ENCODE measurements at regions of chr1 and their contacts with region 1.

Region 1: DNA sequence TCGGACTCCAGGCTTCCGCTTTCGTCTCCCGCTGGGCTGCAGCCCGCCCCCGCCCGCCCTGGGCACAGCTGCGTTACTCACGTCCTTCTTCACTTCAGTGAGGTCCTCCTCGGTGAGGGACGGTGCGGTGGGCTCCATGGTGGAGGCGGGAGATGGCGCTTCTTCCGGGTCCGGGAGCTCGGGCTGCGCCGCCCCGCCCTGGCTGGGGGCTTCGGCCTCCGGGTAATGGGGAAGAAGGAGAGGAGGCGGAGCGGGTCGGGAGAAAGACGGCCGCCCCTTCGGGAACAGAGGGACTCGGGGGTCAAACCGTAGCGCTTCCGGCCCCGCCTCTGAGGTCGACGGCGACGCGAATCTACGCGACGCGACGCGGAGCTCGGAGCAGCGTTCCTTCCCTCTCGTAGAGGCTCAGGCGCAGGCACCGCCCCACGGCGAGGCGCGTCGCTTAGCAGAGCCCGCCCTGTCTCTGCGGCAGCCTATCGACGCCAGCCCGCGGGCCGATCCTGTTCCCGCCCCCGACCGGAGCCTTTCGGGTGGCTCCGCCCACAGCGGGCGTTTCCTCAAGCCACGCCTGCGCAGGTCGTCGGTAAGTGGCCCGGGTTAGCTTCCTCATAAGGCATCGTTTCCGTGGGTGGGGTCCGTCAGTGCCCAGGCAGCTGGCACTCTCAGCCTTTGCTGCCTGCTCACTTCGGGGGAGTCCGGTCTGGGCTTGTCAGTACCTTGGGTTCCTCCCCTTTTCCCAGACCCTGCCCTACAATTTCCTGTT is at the start of gene BCL10:
- DNase-seq: peak; percentile 99
- ATAC-seq: peak; percentile 92
- H3K4me3 ChIP-seq: peak within 1 kb of the TSS; percentile 87 to 99 (median 98)
- H3K4me3 Mint-ChIP-seq: peak within 1 kb of the TSS; percentile 96
- H3K27ac ChIP-seq: peak within 1 kb of the TSS; percentile 99
- H3K27ac Mint-ChIP-seq: peak within 1 kb of the TSS; percentile 97
- H3K4me1 ChIP-seq: peaks cover 38 to 47% of the 10 kb centered on the region in 2 donors
- H3K4me1 Mint-ChIP-seq: peaks cover 55% of the 10 kb centered on the region
- H3K27me3 ChIP-seq: no peaks in the 10 kb centered on the region
- H3K27me3 Mint-ChIP-seq: no peaks in the 10 kb centered on the region
- CTCF ChIP-seq: no peak
- total RNA-seq, gene BCL10: 60.5 and 64.4 TPM in 2 replicates

Region 2: DNA sequence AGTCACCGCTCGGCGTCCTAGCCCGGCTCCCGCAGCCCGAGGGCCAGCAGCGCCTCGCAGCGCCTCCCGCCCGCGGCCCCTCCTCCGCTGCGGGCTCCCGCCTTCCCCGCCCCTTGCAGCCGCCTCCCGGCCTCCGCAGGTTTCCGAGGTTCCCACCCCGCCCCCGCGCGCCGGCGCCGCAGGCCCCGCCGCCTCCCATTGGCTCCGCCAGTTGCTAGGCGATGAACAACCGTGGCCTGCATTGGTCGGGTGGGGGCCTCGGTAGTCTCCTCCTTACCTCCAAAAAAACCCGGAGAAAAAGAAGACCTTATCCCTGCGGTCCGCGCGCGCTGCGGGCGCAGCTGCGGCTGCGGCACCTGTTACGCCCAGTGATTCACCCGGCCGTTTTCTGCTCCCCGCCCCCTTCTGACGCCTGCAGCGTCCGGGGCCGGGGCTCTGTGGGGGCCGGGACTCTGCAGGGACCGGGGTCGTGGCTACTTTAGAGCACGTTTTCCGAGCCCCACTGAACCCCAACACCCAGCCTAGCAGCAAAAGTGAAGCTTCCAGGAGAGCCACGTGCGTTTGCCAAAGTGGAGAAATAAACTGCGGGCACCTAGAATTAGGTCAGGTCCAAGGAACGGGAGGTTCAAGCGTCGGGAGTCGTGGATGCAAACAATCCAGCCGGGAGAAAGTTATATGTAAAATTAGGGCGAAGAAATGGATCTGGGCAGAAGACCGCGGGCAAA is 585.8 kb before region 1 on chr1 and contains the start of gene SSX2IP:
- CTCF ChIA-PET with region 1: no interaction called
- POLR2A ChIA-PET with region 1: no interaction called
- intact Hi-C with region 1: loop called (anchors 2 kb)
- DNase-seq: peak; percentile 97
- ATAC-seq: peak; percentile 86
- H3K4me3 ChIP-seq: peak within 1 kb of the TSS; percentile 71 to 93 (median 85)
- H3K4me3 Mint-ChIP-seq: peak within 1 kb of the TSS; percentile 80
- H3K27ac ChIP-seq: peak within 1 kb of the TSS; percentile 56 to 64
- H3K27ac Mint-ChIP-seq: peak within 1 kb of the TSS; percentile 62
- H3K4me1 ChIP-seq: peaks cover 12 to 24% of the 10 kb centered on the region in 2 donors
- H3K4me1 Mint-ChIP-seq: peaks cover 27% of the 10 kb centered on the region
- H3K27me3 ChIP-seq: no peaks in the 10 kb centered on the region
- H3K27me3 Mint-ChIP-seq: no peaks in the 10 kb centered on the region
- CTCF ChIP-seq: no peak
- total RNA-seq, gene SSX2IP: 7.1 and 10.3 TPM in 2 replicates

Region 3: DNA sequence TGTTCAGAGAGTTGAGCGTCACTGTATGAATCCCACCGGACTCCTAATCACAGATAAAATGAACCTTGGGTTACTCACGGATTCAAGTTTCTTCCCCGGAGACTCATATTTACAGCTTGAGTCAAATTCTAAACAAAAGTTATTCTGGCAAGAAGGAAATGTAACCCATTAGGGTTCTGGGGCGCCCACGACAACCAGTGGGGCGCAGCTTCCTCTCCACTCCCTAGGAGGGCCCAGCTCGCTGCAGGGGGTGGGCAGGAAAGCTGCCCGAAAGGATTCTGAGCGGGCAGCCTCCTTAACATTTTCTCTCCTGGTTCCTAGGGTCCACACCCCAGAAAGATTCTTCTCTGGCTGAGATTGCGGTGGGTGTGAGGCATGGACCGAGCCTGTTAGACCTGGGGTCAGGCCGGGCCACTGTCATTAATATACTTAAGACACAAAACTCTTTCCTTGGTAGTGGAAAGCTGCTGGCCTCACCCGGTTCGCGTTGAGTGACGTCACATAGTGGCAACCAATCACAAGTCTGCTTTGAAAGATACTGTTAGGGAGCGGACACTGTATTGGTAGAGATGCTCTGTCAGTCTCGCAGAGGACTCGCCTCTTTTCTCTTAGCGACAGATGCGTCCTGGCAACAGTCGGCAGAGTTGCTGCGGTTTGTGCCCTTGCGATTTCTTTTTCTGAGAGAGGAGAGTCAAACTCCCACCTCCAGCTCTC is 214.5 kb before region 1 on chr1:
- CTCF ChIA-PET with region 1: no interaction called
- POLR2A ChIA-PET with region 1: no interaction called
- intact Hi-C with region 1: loop called (anchors 1 kb)
- DNase-seq: peak; percentile 94
- ATAC-seq: peak; percentile 99
- H3K4me3 ChIP-seq: peak overlapping the region in 4 of 5 experiments; percentile 45 to 67 (median 55)
- H3K4me3 Mint-ChIP-seq: peak overlapping the region; percentile 92
- H3K27ac ChIP-seq: no peak overlapping the region
- H3K27ac Mint-ChIP-seq: peak overlapping the region; percentile 87
- H3K4me1 ChIP-seq: peaks cover 10 to 13% of the 10 kb centered on the region in 2 donors
- H3K4me1 Mint-ChIP-seq: peaks cover 18% of the 10 kb centered on the region
- H3K27me3 ChIP-seq: peaks cover 0 to 3% (median 0%) of the 10 kb centered on the region in 4 experiments
- H3K27me3 Mint-ChIP-seq: peaks cover 16% of the 10 kb centered on the region
- CTCF ChIP-seq: no peak

Region 4: DNA sequence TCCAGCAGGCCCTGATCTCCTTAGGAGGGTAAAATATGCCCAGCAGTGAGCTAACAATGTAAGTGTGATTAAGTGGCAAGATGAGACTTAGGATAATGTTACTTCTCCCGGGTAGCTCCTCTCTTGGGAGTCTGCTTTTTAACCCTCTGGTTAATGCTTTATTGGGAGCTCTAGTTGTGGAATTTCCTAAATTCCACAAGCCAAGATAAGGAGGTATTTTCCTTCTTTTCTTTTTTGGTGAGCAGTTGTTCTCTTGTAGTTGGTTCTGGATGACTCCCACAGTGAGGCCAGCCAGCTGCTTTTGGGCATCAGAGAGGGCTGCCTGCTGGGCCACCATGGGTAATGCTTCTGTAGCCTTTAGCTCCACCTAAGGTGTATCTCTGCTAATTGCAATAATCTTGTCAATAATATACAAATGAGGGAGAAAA is 36.2 kb before region 1 on chr1:
- CTCF ChIA-PET with region 1: no interaction called
- POLR2A ChIA-PET with region 1: no interaction called
- intact Hi-C with region 1: no loop called
- DNase-seq: no peak
- ATAC-seq: no peak
- H3K4me3 ChIP-seq: no peak overlapping the region
- H3K4me3 Mint-ChIP-seq: no peak overlapping the region
- H3K27ac ChIP-seq: no peak overlapping the region
- H3K27ac Mint-ChIP-seq: no peak overlapping the region
- H3K4me1 ChIP-seq: no peaks in the 10 kb centered on the region
- H3K4me1 Mint-ChIP-seq: peaks cover 1% of the 10 kb centered on the region
- H3K27me3 ChIP-seq: peaks cover 0 to 7% (median 4%) of the 10 kb centered on the region in 4 experiments
- H3K27me3 Mint-ChIP-seq: peaks cover 15% of the 10 kb centered on the region
- CTCF ChIP-seq: no peak

Region 5: DNA sequence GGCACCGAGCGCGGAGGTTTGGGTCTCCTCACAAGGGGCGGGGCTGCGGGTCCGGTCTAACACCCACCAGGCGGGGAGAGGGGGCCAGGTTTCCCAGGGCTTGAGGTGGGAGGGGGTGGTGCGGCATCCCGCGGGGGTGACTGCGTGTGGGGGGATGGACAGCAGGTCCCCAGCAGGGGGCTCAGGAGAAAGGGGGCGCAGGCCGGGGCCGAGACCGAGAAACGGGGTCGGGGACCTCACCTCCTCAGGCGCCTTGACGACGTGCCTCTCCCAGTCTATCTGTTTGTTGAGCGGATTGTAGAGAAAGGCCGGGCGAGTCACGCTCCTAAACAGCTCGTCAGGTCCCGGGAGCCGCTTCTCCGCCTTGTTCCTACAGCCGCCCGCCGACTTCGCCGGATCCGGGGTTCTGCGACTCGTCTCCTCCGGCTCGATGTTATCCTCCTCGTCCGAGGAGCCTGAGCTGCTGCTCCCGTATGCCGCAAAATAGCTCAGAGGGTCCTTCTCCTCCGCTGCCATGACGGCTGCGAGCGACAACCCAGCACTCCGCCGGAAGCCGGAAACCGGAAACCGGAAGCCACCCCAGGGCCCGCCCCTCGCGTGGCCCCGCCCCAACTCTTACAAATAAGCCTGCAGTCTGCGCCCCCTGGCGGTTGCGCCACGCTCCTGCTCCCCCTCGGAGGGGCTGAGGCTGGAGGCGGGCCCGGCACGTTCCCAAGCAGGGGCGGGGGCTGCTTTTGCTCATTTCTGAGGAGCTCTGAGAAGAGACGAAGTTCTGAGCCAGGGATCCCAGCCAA is 17.1 kb before region 1 on chr1 and contains the start of gene C1orf52:
- CTCF ChIA-PET with region 1: interaction called, 59 read pairs
- POLR2A ChIA-PET with region 1: interaction called, 26 read pairs
- intact Hi-C with region 1: loop called (anchors 1 kb)
- DNase-seq: peak; percentile 94
- ATAC-seq: peak; percentile 98
- H3K4me3 ChIP-seq: peak within 1 kb of the TSS; percentile 66 to 94 (median 85)
- H3K4me3 Mint-ChIP-seq: peak within 1 kb of the TSS; percentile 95
- H3K27ac ChIP-seq: peak within 1 kb of the TSS; percentile 62 to 83
- H3K27ac Mint-ChIP-seq: peak within 1 kb of the TSS; percentile 92
- H3K4me1 ChIP-seq: peaks cover 17 to 18% of the 10 kb centered on the region in 2 donors
- H3K4me1 Mint-ChIP-seq: peaks cover 38% of the 10 kb centered on the region
- H3K27me3 ChIP-seq: no peaks in the 10 kb centered on the region
- H3K27me3 Mint-ChIP-seq: no peaks in the 10 kb centered on the region
- CTCF ChIP-seq: peak; percentile 99
- total RNA-seq, gene C1orf52: 39.9 and 45.3 TPM in 2 replicates

Region 6: GRCh38 chr1:85413169-85413568 is 136.8 kb after region 1 on chr1:
- CTCF ChIA-PET with region 1: no interaction called
- POLR2A ChIA-PET with region 1: no interaction called
- intact Hi-C with region 1: no loop called
- DNase-seq: no peak
- ATAC-seq: no peak
- H3K4me3 ChIP-seq: no peak overlapping the region
- H3K4me3 Mint-ChIP-seq: no peak overlapping the region
- H3K27ac ChIP-seq: no peak overlapping the region
- H3K27ac Mint-ChIP-seq: no peak overlapping the region
- H3K4me1 ChIP-seq: no peaks in the 10 kb centered on the region
- H3K4me1 Mint-ChIP-seq: no peaks in the 10 kb centered on the region
- H3K27me3 ChIP-seq: no peaks in the 10 kb centered on the region
- H3K27me3 Mint-ChIP-seq: no peaks in the 10 kb centered on the region
- CTCF ChIP-seq: no peak

Region 7: GRCh38 chr1:85707990-85708828 is 431.8 kb after region 1 on chr1 and contains the start of gene ZNHIT6:
- CTCF ChIA-PET with region 1: no interaction called
- POLR2A ChIA-PET with region 1: interaction called, 4 read pairs
- intact Hi-C with region 1: loop called (anchors 2 kb)
- DNase-seq: peak; percentile 92
- ATAC-seq: peak; percentile 95
- H3K4me3 ChIP-seq: peak within 1 kb of the TSS; percentile 76 to 99 (median 91)
- H3K4me3 Mint-ChIP-seq: no peak within 1 kb of the TSS
- H3K27ac ChIP-seq: peak within 1 kb of the TSS; percentile 73
- H3K27ac Mint-ChIP-seq: no peak within 1 kb of the TSS
- H3K4me1 ChIP-seq: peaks cover 16 to 22% of the 10 kb centered on the region in 2 donors
- H3K4me1 Mint-ChIP-seq: peaks cover 16% of the 10 kb centered on the region
- H3K27me3 ChIP-seq: peaks cover 0 to under 1% (median 0%) of the 10 kb centered on the region in 4 experiments
- H3K27me3 Mint-ChIP-seq: no peaks in the 10 kb centered on the region
- CTCF ChIP-seq: peak; percentile 27
- total RNA-seq, gene ZNHIT6: 16.3 and 17.3 TPM in 2 replicates